ENCODE measurements at regions of chr6 and their contacts with region 1.

Region 1: GRCh38 chr6:135497412-135498269 is at the start of gene AHI1:
- DNase-seq: peak in 1 of 2 donors; percentile 96
- H3K4me3 ChIP-seq: peak within 1 kb of the TSS; percentile 57 to 88
- H3K27ac ChIP-seq: peak within 1 kb of the TSS; percentile 94
- H3K4me1 ChIP-seq: peaks cover 28% of the 10 kb centered on the region
- H3K27me3 ChIP-seq: no peaks in the 10 kb centered on the region
- CTCF ChIP-seq: peak in 2 of 3 experiments; percentile 42
- POLR2A ChIP-seq: peak; percentile 61 to 90
- total RNA-seq, gene AHI1: 28.7 TPM

Region 2: GRCh38 chr6:135054569-135055498 is 442.8 kb before region 1 on chr6 and contains the start of gene HBS1L:
- intact Hi-C with region 1: no loop called
- DNase-seq: peak; percentile 96 to 97
- H3K4me3 ChIP-seq: peak within 1 kb of the TSS; percentile 59 to 76
- H3K27ac ChIP-seq: peak within 1 kb of the TSS; percentile 83
- H3K4me1 ChIP-seq: peaks cover 26% of the 10 kb centered on the region
- H3K27me3 ChIP-seq: no peaks in the 10 kb centered on the region
- CTCF ChIP-seq: peak in 1 of 3 experiments; percentile 13
- POLR2A ChIP-seq: peak in 1 of 2 donors; percentile 86
- total RNA-seq, gene HBS1L: 41.7 TPM

Region 3: GRCh38 chr6:135481783-135482369 is 15.8 kb before region 1 on chr6:
- intact Hi-C with region 1: no loop called
- DNase-seq: no peak
- H3K4me3 ChIP-seq: no peak overlapping the region
- H3K27ac ChIP-seq: no peak overlapping the region
- H3K4me1 ChIP-seq: no peaks in the 10 kb centered on the region
- H3K27me3 ChIP-seq: no peaks in the 10 kb centered on the region
- CTCF ChIP-seq: no peak
- POLR2A ChIP-seq: no peak

Region 4: DNA sequence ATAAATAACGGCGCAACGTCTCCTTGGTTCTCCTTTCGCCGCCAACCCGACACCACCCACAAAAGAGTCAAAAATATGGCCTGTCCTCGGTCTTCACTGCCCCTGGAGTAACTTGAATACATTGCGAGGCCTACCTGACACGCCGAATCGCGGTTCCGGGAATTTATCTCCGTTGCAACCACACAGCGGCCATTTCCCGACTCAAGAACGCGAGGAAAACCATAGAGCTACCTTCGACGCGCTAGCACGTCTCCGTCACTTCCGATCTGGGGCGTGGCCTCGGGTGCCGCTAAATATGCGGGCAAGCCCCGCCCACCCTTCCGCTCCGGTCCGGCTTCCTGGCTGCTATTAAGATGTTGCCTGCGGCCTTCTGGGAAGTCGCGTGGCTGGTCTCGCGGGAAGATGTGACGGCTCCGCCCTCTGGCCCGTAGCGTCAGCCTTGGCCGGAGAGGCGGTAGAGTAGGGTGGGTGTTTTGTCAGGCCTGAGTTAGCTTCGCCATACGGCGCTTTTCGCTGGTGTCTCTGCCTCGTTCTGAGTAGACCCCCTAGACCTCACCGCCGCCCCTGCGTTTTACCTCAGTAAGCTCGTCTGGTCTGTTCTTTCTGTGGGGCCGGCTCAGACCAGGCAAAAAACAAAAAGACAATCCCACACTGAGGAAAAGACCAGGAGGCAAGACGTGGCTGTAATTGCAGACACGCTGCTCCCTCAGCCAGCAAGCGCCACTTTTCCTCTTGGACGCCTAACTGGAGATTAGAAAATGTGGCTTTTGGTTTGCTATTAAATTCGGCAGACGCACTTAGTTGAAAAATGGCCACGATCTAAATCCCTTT is 792.2 kb after region 1 on chr6 and contains the start of gene BCLAF1:
- intact Hi-C with region 1: loop called (anchors 5 kb)
- DNase-seq: peak; percentile 99
- H3K4me3 ChIP-seq: peak within 1 kb of the TSS; percentile 93 to 94
- H3K27ac ChIP-seq: peak within 1 kb of the TSS; percentile 100
- H3K4me1 ChIP-seq: peaks cover 53% of the 10 kb centered on the region
- H3K27me3 ChIP-seq: no peaks in the 10 kb centered on the region
- CTCF ChIP-seq: no peak
- POLR2A ChIP-seq: peak in 1 of 2 donors; percentile 97
- total RNA-seq, gene BCLAF1: 97.0 TPM

Region 5: DNA sequence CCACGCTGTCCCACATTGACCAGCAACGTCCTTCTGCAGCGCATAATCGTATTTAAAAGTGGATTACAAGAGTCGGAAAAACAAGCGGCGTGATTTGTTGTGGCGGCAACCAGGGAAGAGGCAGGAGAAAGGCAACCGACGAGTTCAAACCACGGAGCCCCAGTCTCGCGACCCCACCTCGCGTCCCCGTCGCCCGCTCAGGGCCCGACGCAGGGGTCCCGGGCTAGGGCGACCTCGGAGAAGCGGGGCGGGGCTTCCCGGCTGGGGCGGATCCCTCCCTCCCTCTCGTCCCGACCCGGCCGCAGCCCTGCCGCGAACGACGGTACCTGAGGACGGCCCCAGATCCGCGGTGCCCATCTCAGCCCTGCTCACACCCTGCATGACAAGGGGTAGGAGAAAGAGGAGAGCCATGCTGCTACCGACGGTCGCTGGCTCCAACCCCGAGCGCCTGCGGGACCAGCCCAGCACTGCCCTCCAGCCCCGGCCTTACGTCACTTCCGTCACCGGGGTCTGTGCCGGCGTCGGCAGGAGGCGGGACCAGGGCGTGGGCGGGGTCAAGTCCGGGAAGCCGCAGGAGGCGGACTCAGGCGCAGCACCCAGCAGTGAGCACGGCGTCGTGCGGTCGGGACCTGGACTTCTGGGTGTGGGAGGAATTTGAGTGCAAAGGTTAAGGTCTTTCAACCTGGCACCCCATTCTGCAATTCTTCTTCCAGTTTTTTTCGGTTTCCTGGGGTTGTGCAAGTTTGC is 1721.4 kb after region 1 on chr6 and contains the start of gene IFNGR1:
- intact Hi-C with region 1: loop called (anchors 10 kb)
- DNase-seq: peak in 1 of 2 donors; percentile 98
- H3K4me3 ChIP-seq: peak within 1 kb of the TSS; percentile 83 to 98
- H3K27ac ChIP-seq: peak within 1 kb of the TSS; percentile 100
- H3K4me1 ChIP-seq: peaks cover 79% of the 10 kb centered on the region
- H3K27me3 ChIP-seq: no peaks in the 10 kb centered on the region
- CTCF ChIP-seq: no peak
- POLR2A ChIP-seq: peak; percentile 35 to 98
- total RNA-seq, gene IFNGR1: 76.6 TPM